T-cell (primary cell): ENCODE measurements at regions of chr3 and their contacts with region 1.

Region 1: DNA sequence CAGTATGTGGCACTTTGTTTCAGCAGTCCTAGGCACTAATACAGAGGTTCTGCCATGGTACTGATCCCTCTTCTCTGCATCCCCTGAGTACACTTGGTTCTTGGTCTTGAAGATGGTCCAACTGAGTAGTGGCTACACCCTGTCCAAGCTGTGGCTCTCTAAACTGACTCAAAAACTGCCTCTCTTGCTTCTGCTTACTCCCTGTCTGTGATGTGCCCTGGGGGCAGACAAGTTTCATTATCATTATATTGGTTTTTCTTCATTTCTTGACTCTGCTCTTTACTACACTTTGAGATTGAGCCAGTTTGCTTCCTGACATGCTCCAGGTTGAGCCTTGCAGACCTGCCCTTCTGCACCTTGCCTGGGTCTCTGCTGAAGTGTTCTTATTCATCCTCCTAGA is 18.9 kb upstream of the ST3GAL6 start:
- DNase-seq: no peak
- ATAC-seq: no peak
- H3K4me3 ChIP-seq: no peak overlapping the region
- H3K4me3 Mint-ChIP-seq: no peak overlapping the region
- H3K27ac ChIP-seq: no peak overlapping the region
- H3K27ac Mint-ChIP-seq: no peak overlapping the region
- H3K4me1 ChIP-seq: no peaks in the 10 kb centered on the region
- H3K4me1 Mint-ChIP-seq: no peaks in the 10 kb centered on the region
- H3K27me3 ChIP-seq: peaks cover 0 to 4% of the 10 kb centered on the region in 2 experiments
- H3K27me3 Mint-ChIP-seq: peaks cover 20 to 22% of the 10 kb centered on the region in 2 donors

Region 2: DNA sequence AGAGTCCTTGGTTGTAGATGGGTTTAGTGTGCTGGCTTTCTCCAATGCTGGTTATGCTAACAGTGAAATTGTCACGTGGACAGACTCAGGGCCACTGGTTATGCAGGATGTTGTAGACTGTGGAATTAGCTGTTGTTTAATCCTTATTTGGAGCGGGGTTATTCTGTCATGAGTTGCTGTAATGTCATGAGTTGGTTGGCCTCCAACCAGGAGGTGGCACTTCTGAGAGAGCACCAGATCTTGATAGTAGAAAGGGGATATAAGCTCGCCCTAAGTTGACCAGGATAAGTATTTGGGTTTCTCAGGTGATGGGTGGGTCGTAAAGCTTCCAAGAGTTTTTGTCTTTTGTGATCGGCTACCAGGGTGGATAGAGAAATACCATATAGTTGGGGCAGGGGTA is 99.7 kb before region 1 on chr3:
- CTCF ChIA-PET with region 1: interaction called in 1 of 2 experiments, 10 read pairs
- POLR2A ChIA-PET with region 1: no interaction called
- DNase-seq: no peak
- ATAC-seq: no peak
- H3K4me3 ChIP-seq: no peak overlapping the region
- H3K4me3 Mint-ChIP-seq: no peak overlapping the region
- H3K27ac ChIP-seq: no peak overlapping the region
- H3K27ac Mint-ChIP-seq: no peak overlapping the region
- H3K4me1 ChIP-seq: no peaks in the 10 kb centered on the region
- H3K4me1 Mint-ChIP-seq: peaks cover 0 to 5% (median 0%) of the 10 kb centered on the region in 3 donors
- H3K27me3 ChIP-seq: peaks cover 0 to 12% of the 10 kb centered on the region in 2 experiments
- H3K27me3 Mint-ChIP-seq: peaks cover 12 to 34% of the 10 kb centered on the region in 2 donors

Region 3: GRCh38 chr3:98754483-98754882 is 10.2 kb after region 1 on chr3:
- CTCF ChIA-PET with region 1: no interaction called
- POLR2A ChIA-PET with region 1: no interaction called
- DNase-seq: no peak
- ATAC-seq: no peak
- H3K4me3 ChIP-seq: no peak overlapping the region
- H3K4me3 Mint-ChIP-seq: no peak overlapping the region
- H3K27ac ChIP-seq: no peak overlapping the region
- H3K27ac Mint-ChIP-seq: no peak overlapping the region
- H3K4me1 ChIP-seq: no peaks in the 10 kb centered on the region
- H3K4me1 Mint-ChIP-seq: no peaks in the 10 kb centered on the region
- H3K27me3 ChIP-seq: no peaks in the 10 kb centered on the region
- H3K27me3 Mint-ChIP-seq: peaks cover 5 to 9% of the 10 kb centered on the region in 2 donors